ENCODE measurements at regions of chr5 and their contacts with region 1.

Region 1: DNA sequence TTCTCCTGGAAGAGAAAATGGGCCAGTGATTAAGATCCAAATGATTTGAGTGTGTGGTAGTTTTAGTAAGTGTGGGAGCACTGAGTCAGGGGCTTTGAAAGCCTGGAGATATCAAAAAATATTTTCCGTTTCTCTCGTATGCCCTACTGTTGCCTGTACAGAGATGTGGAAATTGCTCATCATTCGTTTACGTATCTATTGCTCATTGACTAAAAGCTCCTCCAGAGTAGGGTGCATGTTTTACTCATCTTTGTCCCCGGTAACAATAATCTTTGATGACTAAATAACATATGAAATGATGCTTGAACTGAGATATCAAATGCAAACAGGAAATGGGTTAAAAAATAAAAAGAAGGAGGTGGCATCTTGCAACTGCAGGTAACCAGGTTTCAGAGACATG is 114.2 kb upstream of the FST start:
- DNase-seq: no peak
- ATAC-seq: peak; percentile 76
- H3K4me3 Mint-ChIP-seq: no peak overlapping the region
- H3K27ac Mint-ChIP-seq: peak overlapping the region; percentile 44
- H3K4me1 Mint-ChIP-seq: peaks cover 4% of the 10 kb centered on the region
- H3K27me3 Mint-ChIP-seq: peaks cover 18% of the 10 kb centered on the region

Region 2: DNA sequence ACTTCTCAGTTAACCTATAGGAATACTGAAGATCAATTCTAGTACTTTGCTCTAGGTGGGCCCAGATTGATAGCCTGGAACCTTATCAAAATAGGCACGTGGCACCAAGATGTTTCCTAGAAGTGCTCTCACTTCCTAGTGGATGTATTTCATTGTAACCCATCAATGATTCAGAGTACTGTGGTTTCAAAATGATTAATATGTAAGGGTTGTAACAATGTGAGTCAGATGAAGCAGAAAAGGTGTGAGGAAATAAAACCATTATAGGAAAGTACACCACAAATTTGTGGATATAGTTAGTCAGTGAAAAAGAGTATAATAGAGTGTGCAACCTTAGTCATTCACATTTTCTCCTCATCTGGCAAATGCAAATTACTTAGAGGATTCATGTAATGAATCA is 63.1 kb before region 1 on chr5:
- CTCF ChIA-PET with region 1: no interaction called
- POLR2A ChIA-PET with region 1: no interaction called
- intact Hi-C with region 1: loop called in 1 of 2 experiments (anchors 2 kb)
- DNase-seq: peak; percentile 14
- ATAC-seq: peak; percentile 93
- H3K4me3 Mint-ChIP-seq: no peak overlapping the region
- H3K27ac Mint-ChIP-seq: peak overlapping the region; percentile 33
- H3K4me1 Mint-ChIP-seq: peaks cover 20% of the 10 kb centered on the region
- H3K27me3 Mint-ChIP-seq: peaks cover 12% of the 10 kb centered on the region

Measured in activated CD4-positive, alpha-beta T cell treated with anti-CD3 and anti-CD28 coated beads for 36 hours (primary cell).